Natural killer cell (primary cell): ENCODE measurements at regions of chrX and their contacts with region 1.

Region 1: DNA sequence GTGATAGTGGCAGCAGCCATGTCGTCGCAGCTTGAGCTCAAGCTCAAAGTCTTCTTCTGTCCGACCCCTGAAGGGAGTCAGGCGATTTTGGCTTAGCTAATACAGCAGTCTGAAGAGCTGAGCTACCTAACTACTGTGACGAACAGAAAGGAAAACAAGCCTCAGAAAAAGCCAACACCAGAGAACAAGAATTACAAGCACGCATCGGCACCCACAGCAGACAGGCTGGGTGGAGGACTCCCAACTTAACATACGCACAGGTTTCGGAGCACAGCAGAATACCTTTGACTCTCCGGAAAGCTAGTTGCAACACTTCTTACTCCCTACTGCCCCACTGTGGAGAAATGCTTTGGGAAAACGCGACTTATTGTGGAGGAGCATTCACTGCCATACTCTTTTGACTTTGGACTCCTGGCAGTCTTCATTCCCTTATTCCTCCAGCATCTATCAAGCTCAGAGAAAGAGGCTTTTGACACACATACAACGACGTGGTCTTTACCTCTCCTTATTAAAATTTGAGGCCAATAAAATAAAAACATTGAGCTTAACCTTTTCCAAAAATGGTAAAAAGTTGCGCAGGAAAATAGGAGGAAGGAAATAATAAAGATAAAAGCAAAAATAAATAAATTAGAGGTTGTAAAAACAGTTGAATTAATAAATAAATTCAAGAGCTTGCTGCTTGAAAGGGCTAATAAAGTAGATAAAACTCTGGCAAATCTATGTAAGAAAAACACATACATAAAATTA is 41.3 kb upstream of the GPC3 start:
- DNase-seq: peak in 1 of 2 donors; percentile 52
- ATAC-seq: peak in 1 of 3 donors; percentile 40
- H3K4me3 ChIP-seq: no peak overlapping the region
- H3K4me3 Mint-ChIP-seq: peak overlapping the region; percentile 18
- H3K27ac ChIP-seq: no peak overlapping the region
- H3K27ac Mint-ChIP-seq: no peak overlapping the region
- H3K4me1 ChIP-seq: no peaks in the 10 kb centered on the region
- H3K4me1 Mint-ChIP-seq: peaks cover 6 to 8% of the 10 kb centered on the region in 2 donors
- H3K27me3 ChIP-seq: no peaks in the 10 kb centered on the region
- H3K27me3 Mint-ChIP-seq: peaks cover 3 to 13% of the 10 kb centered on the region in 2 donors
- CTCF ChIP-seq: no peak

Region 2: DNA sequence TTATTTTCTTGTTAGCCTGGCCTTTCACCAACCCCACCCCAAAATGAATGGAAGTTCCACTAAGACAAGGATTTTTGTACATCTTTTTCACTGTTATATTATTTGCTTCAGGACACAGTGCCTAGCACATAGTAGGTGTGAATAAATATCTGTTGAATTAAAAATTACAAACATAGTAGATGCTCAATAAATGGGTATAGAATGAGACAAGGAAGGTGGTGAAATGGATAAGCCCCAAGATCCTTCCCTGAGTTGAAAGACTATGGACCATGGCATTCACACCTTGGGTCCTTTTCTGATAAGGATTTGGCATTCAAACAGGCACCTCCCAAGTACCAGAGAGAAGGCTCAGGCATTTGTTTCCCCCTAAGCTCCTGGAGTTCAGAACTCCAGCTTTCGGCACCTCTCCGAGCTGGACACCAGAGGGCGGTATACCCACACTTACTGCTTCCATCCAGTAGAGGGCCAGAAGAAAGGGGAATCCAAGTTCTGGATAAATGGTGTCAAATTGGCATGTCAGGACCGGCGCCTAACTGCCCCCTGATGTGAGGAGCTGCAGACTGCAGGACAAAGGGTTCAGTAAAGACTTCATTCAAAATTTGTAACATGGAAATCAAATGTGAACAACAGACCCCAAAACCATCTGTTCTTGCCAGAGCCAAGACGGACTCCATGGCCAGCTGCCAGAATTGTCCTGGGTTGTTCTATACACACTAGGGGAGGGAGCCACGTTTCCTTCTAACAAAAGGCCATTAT is 234.4 kb before region 1 on chrX:
- intact Hi-C with region 1: loop called (anchors 10 kb)
- DNase-seq: peak; percentile 21 to 76
- ATAC-seq: peak; percentile 68 to 95 (median 76)
- H3K4me3 ChIP-seq: no peak overlapping the region
- H3K4me3 Mint-ChIP-seq: no peak overlapping the region
- H3K27ac ChIP-seq: no peak overlapping the region
- H3K27ac Mint-ChIP-seq: no peak overlapping the region
- H3K4me1 ChIP-seq: no peaks in the 10 kb centered on the region
- H3K4me1 Mint-ChIP-seq: no peaks in the 10 kb centered on the region
- H3K27me3 ChIP-seq: no peaks in the 10 kb centered on the region
- H3K27me3 Mint-ChIP-seq: peaks cover 3 to 14% of the 10 kb centered on the region in 2 donors
- CTCF ChIP-seq: peak; percentile 84